Psoas muscle (tissue), 8 donors: ENCODE measurements at regions of chr17 and their contacts with region 1.

Region 1: DNA sequence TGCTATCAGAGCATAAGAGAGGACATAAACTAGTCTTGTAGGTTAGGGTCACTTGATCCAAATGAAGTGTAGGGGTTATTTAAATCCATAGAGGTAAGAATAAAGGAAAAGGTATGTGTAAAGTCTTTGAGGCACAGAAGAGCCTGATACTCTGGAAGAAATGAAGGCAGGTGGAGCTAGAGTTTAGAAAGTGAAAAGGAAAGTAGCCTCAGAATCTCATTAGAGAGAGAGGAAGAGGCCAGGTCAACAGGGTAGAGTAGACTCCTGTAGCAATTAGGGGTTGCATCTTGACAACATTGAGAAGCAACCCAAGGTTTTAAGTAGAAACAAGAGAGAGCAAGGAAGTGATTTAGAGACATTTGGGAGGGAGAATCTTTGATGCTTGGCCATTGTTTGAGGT is 235.2 kb upstream of the SOX9 start:
- DNase-seq: no peak
- ATAC-seq: peak in 1 of 4 donors; percentile 43
- H3K4me3 ChIP-seq: no peak overlapping the region
- H3K27ac ChIP-seq: no peak overlapping the region
- H3K4me1 ChIP-seq: no peaks in the 10 kb centered on the region
- H3K27me3 ChIP-seq: no peaks in the 10 kb centered on the region
- CTCF ChIP-seq: no peak

Region 2: GRCh38 chr17:72063262-72063661 is 177.6 kb after region 1 on chr17:
- intact Hi-C with region 1: loop called in 1 of 2 experiments (anchors 10 kb)
- DNase-seq: no peak
- ATAC-seq: no peak
- H3K4me3 ChIP-seq: no peak overlapping the region
- H3K27ac ChIP-seq: no peak overlapping the region
- H3K4me1 ChIP-seq: no peaks in the 10 kb centered on the region
- H3K27me3 ChIP-seq: no peaks in the 10 kb centered on the region
- CTCF ChIP-seq: no peak